ENCODE measurements at regions of chr11 and their contacts with region 1.

Region 1: DNA sequence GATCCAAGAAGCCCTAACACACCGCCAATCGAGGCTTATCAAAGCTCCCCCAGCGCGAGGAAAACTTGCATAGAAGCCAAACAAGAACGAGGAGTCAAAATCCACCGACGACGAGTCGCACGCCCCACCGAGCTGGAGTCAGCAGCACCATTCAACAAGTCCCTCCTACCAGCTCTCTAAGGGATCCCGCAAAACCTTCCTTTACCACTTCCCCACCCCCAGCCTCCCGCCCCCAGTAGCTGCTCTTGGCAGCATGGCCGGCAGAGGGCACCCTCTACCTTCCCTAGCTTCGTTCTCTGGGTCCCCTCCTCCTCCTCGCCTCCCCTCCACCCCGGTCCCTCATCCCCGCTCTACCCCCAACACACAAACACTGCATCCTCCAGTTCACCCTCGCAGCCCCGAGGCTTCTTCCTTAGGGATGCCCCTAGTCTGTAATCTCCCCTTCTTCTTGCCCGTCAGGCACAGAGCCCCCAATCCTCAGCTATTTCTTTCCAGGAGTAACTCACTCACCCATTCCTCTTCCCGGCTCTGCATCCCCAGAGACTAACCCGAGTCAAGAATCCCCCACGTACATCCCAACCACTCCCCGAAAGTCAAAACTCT is 1.3 kb downstream of the BDNF start:
- DNase-seq: peak; percentile 88
- ATAC-seq: peak; percentile 50
- H3K4me3 ChIP-seq: peak overlapping the region; percentile 79
- H3K27ac ChIP-seq: no peak overlapping the region
- H3K4me1 ChIP-seq: peaks cover 31% of the 10 kb centered on the region
- H3K27me3 ChIP-seq: no peaks in the 10 kb centered on the region
- CTCF ChIP-seq: peak; percentile 72

Region 2: GRCh38 chr11:27635567-27636037 is 63.4 kb before region 1 on chr11:
- CTCF ChIA-PET with region 1: no interaction called
- POLR2A ChIA-PET with region 1: no interaction called
- intact Hi-C with region 1: no loop called
- DNase-seq: no peak
- ATAC-seq: no peak
- H3K4me3 ChIP-seq: no peak overlapping the region
- H3K27ac ChIP-seq: no peak overlapping the region
- H3K4me1 ChIP-seq: no peaks in the 10 kb centered on the region
- H3K27me3 ChIP-seq: no peaks in the 10 kb centered on the region
- CTCF ChIP-seq: no peak

Region 3: DNA sequence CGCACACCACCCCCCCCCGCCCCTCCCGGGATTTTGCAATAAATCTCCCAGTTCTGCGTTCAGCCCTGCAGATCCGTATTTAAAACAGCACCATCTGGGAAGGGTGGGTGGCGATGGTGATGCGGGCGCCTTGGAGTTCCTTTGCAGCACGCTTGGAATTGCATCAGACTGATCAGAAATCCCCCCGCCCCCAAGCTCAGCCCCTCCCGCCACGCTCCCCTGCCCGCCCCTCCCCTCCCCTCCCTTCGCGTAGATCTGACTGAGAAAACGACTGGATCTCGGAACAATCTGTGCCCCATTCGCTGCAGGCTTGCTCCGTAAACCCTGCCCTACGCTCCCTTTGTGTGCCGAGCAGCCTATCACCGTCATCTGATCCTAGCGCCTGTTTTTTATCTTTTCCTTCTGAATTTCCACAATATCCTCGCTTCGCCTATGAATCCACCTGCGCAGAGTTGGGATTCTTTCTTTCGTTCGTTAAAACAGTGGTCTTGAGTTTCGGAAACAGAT is 19.4 kb after region 1 on chr11:
- CTCF ChIA-PET with region 1: interaction called, 5 read pairs
- POLR2A ChIA-PET with region 1: interaction called, 4 read pairs
- intact Hi-C with region 1: loop called (anchors 1 kb)
- DNase-seq: peak; percentile 79
- ATAC-seq: peak; percentile 86
- H3K4me3 ChIP-seq: peak overlapping the region; percentile 97
- H3K27ac ChIP-seq: peak overlapping the region; percentile 69
- H3K4me1 ChIP-seq: peaks cover 6% of the 10 kb centered on the region; the same call in 1 of the 2 replicates
- H3K27me3 ChIP-seq: no peaks in the 10 kb centered on the region
- CTCF ChIP-seq: no peak

Region 4: GRCh38 chr11:27945348-27945747 is 246.4 kb after region 1 on chr11:
- CTCF ChIA-PET with region 1: no interaction called
- POLR2A ChIA-PET with region 1: no interaction called
- intact Hi-C with region 1: no loop called
- DNase-seq: no peak
- ATAC-seq: no peak
- H3K4me3 ChIP-seq: no peak overlapping the region
- H3K27ac ChIP-seq: no peak overlapping the region
- H3K4me1 ChIP-seq: no peaks in the 10 kb centered on the region
- H3K27me3 ChIP-seq: no peaks in the 10 kb centered on the region
- CTCF ChIP-seq: no peak

Region 5: GRCh38 chr11:28049338-28050216 is 350.6 kb after region 1 on chr11:
- CTCF ChIA-PET with region 1: no interaction called
- POLR2A ChIA-PET with region 1: no interaction called
- intact Hi-C with region 1: loop called (anchors 5 kb)
- DNase-seq: peak; percentile 90
- ATAC-seq: peak; percentile 86
- H3K4me3 ChIP-seq: no peak overlapping the region
- H3K27ac ChIP-seq: peak overlapping the region; percentile 87
- H3K4me1 ChIP-seq: peaks cover 28% of the 10 kb centered on the region
- H3K27me3 ChIP-seq: no peaks in the 10 kb centered on the region
- CTCF ChIP-seq: no peak

Region 6: DNA sequence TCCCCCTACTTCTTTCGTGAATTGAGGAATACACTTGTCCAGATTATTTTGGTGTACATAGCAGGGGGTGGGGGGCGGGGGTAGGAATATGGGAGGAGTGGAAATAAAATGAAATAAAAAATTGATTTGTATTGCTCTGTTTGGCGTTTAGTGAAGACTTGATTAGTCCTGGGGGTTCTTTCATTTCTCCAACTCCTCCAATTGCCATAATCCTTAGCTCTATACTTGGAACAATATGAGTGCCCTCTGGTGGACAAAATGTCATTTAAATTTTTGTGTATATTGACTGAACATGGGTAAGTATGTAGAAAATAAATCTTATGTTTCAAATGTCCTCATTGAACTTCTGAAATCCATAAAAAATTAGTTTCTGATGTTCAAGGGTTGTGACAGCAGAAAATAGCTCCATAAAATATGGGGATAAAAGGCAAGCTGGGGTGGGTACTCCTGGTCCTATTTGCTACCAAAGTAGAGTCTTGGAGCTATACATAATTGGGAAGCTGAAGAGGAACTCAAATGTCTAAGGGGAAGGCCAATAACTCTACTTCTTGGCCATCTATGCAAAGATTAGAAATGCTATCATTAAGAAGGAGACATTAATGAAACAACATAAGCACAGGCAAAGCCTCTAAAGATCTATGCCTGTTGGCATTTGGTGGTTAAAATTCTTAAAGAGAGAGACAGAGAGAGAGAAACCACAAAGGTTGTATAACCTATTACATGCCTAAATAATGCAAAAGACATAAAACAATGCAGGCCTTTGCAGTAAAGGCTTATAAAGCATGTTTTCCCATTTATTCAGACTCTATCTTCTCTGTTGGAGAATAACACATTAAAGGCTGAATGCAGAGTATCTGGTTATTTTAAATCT is 830.8 kb after region 1 on chr11:
- CTCF ChIA-PET with region 1: interaction called, 22 read pairs
- POLR2A ChIA-PET with region 1: interaction called, 4 read pairs
- intact Hi-C with region 1: loop called (anchors 1 kb)
- DNase-seq: peak; percentile 83
- ATAC-seq: peak; percentile 65
- H3K4me3 ChIP-seq: no peak overlapping the region
- H3K27ac ChIP-seq: no peak overlapping the region
- H3K4me1 ChIP-seq: peaks cover 7% of the 10 kb centered on the region
- H3K27me3 ChIP-seq: no peaks in the 10 kb centered on the region
- CTCF ChIP-seq: peak; percentile 68

Region 7: DNA sequence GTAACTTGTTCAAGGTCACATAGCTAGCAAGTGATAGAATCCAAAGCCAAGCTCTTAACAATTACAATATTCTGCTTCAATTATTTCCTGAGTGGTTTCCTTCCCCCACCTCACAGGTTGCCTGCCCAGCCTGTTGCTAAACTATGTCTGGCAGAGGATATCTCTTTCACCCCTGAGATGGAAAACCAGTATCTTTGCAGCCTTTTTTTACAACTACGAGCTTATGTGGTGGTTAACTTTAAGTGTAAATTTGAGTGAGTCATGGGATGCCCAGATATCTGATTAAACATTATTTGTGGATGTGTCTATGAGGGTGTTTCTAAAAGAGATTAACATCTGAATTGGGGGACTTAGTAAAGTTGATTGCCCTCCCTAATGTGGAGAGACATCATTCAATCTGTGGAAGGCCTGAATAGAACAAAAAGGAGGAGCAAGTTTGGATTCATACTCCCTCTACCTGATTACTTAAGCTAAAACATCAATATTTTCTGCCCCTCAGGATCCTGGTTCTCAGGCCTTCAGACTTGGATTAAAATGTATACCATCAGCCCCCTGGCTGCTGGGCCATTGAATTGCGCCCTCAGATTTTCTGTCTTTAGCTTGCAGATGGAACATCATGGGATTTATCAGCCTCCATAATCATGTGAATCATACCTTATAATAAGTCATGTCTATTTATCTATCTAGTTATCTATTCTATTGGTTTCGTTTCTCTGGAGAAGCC is 1321.1 kb after region 1 on chr11:
- CTCF ChIA-PET with region 1: interaction called, 6 read pairs
- POLR2A ChIA-PET with region 1: no interaction called
- intact Hi-C with region 1: loop called (anchors 5 kb)
- DNase-seq: peak; percentile 73
- ATAC-seq: peak; percentile 52
- H3K4me3 ChIP-seq: no peak overlapping the region
- H3K27ac ChIP-seq: peak overlapping the region; percentile 70
- H3K4me1 ChIP-seq: peaks cover 34% of the 10 kb centered on the region
- H3K27me3 ChIP-seq: no peaks in the 10 kb centered on the region
- CTCF ChIP-seq: peak; percentile 79

Region 8: GRCh38 chr11:29282088-29282487 is 1583.1 kb after region 1 on chr11:
- CTCF ChIA-PET with region 1: no interaction called
- POLR2A ChIA-PET with region 1: no interaction called
- intact Hi-C with region 1: loop called (anchors 5 kb)
- DNase-seq: peak; percentile 95
- ATAC-seq: peak; percentile 96
- H3K4me3 ChIP-seq: peak overlapping the region; percentile 15; the same call in 1 of the 2 replicates
- H3K27ac ChIP-seq: peak overlapping the region; percentile 57
- H3K4me1 ChIP-seq: peaks cover 28% of the 10 kb centered on the region
- H3K27me3 ChIP-seq: no peaks in the 10 kb centered on the region
- CTCF ChIP-seq: no peak

Measured in PC-3 (cell line).